ENCODE measurements at regions of chr3 and their contacts with region 1.

Region 1: GRCh38 chr3:30637310-30638219 is 31.2 kb downstream of the TGFBR2 start:
- DNase-seq: no peak
- CTCF ChIP-seq: no peak

Region 2: GRCh38 chr3:30600572-30600971 is 37.0 kb before region 1 on chr3:
- CTCF ChIA-PET with region 1: no interaction called
- POLR2A ChIA-PET with region 1: interaction called, 13 read pairs
- DNase-seq: no peak
- CTCF ChIP-seq: no peak

Measured in GM10248 (cell line).